Ovary (tissue), 10 donors: ENCODE measurements at regions of chr11 and their contacts with region 1.

Region 1: GRCh38 chr11:36628765-36629244 is 30.8 kb upstream of the RAG2 start:
- DNase-seq: no peak
- H3K4me3 ChIP-seq: no peak overlapping the region
- H3K27ac ChIP-seq: no peak overlapping the region
- H3K4me1 ChIP-seq: no peaks in the 10 kb centered on the region
- H3K27me3 ChIP-seq: no peaks in the 10 kb centered on the region
- CTCF ChIP-seq: no peak
- EP300 ChIP-seq: no peak
- POLR2A ChIP-seq: no peak

Region 2: DNA sequence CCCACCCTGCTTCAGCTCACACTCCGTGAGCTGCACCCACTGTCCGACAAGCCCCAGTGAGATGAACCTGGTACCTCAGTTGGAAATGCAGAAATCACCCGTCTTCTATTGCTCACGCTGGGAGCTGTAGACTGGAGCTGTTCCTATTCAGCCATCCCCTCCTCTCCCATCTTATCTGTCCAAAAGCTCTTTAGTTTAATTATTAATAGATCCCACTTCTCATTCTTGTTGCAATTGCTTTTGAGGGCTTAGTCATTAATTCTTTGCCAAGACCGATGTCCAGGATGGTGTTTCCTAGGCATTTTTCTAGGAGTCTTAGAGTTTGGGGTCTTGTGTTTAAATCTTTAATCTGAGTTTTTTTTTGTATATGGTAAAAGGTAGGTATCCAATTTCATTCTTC is 849.4 kb before region 1 on chr11:
- intact Hi-C with region 1: loop called in 1 of 4 experiments (anchors 5 kb)
- DNase-seq: no peak
- H3K4me3 ChIP-seq: no peak overlapping the region
- H3K27ac ChIP-seq: no peak overlapping the region
- H3K4me1 ChIP-seq: peaks cover 6% of the 10 kb centered on the region
- H3K27me3 ChIP-seq: no peaks in the 10 kb centered on the region
- CTCF ChIP-seq: no peak
- EP300 ChIP-seq: no peak
- POLR2A ChIP-seq: no peak

Region 3: DNA sequence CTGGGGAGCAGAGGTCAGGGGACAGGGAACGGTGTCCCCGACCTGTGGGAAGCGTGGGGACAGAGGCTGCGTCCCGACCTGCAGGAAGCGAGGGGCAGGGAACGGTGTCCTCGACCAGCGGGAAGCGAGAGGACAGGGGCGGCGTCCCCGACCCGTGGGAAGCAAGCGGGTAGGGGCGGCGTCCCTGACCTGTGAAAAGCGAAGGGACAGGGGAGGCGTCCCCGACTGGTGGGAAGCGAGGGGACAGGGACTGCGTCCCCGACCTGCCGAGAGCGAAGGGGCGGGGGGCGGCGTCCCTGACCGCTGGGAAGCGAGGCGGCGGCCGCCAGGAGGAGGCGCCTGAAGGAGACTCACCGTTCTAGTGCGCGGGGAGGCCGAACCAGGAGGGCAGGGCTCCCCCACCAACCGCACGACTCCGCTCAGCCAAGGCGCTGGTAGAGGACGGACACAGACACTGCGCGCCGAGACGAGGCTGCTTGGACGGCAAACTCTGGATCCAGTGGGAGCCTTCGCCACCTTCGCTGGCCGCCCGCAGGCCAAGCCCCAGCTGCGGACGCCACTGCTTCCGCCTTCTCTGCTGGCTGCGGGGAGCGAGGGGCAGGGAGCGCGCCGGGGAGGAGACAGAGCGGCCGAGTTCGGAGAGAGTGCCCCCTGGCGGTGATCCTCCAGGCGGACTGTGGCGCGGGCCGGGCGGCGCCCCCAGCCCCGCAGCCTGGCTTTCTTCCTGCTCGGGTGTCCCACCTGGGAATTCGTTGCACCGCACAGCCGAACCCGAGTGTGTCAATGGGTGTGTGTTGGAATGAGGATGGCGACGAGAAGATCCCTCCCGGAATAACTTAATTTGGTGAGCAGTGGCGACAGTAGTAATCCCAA is 118.9 kb before region 1 on chr11 and contains the start of gene TRAF6:
- intact Hi-C with region 1: no loop called
- DNase-seq: peak; percentile 84 to 92 (median 90)
- H3K4me3 ChIP-seq: peak within 1 kb of the TSS; percentile 99
- H3K27ac ChIP-seq: peak within 1 kb of the TSS; percentile 40 to 71
- H3K4me1 ChIP-seq: peaks cover 2% of the 10 kb centered on the region
- H3K27me3 ChIP-seq: no peaks in the 10 kb centered on the region
- CTCF ChIP-seq: peak; percentile 79 to 84 (median 84)
- EP300 ChIP-seq: no peak
- POLR2A ChIP-seq: peak; percentile 73
- total RNA-seq, gene TRAF6: 8.7 to 16.4 (median 13.9) TPM